Naive thymus-derived CD4-positive, alpha-beta T cell (primary cell): ENCODE measurements at regions of chr6 and their contacts with region 1.

Region 1: DNA sequence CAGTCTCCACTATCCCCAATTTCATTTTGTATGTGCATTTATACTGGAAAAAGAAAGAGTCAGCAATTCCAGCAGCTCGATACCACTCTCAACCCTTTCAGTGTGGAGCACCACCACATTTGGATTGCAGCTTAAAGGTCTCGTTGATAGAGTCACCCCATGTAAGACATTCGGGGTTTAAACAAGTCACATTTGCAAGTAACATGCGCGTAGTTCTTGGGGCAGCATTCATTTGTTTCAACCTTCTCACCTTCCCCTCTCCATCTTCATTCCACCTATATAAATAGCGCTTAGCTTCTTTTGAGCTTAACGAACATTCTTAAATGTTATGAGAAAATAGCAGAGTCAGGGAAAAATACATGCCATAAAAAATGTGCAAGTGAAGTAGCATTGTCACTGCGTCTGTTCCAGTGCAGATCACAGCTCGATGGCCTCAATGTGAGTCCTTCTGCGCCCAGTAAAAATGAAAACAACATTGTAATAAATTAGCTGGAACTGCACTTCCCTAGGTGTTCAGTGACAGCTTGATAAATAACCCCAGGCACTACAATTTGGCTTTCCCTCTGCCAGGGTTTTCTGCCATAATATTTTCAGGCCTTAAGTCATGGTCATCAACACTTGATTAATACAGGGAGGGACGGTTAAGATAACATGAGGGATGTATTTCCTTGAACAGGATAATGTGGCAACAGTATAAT is 737.8 kb upstream of the NRSN1 start:
- DNase-seq: no peak
- ATAC-seq: no peak
- H3K4me3 ChIP-seq: no peak overlapping the region
- H3K4me3 Mint-ChIP-seq: no peak overlapping the region
- H3K27ac ChIP-seq: no peak overlapping the region
- H3K27ac Mint-ChIP-seq: no peak overlapping the region
- H3K4me1 ChIP-seq: no peaks in the 10 kb centered on the region
- H3K4me1 Mint-ChIP-seq: no peaks in the 10 kb centered on the region
- H3K27me3 ChIP-seq: no peaks in the 10 kb centered on the region
- H3K27me3 Mint-ChIP-seq: no peaks in the 10 kb centered on the region

Region 2: DNA sequence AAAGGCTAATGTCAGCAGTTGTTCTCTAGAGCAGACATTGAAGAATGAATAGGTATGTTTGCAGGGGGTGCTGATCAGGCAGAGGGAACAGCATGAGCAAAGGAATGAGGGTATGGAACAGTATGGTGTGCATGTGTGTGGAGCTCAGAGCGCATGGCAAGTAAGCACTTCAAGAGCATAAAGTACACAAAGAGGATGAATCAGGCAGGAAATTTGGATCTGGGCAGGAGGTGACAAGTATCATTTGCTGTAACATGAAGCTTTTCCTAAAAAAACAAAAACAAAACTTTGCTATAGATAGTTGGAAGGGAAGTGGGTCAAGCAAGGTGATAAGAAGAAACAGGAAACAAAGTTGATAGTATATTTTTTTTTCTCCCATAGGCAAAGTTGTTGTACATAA is 72.1 kb before region 1 on chr6:
- CTCF ChIA-PET with region 1: no interaction called
- POLR2A ChIA-PET with region 1: no interaction called
- intact Hi-C with region 1: loop called in 1 of 2 experiments (anchors 2 kb)
- DNase-seq: no peak
- ATAC-seq: no peak
- H3K4me3 ChIP-seq: no peak overlapping the region
- H3K4me3 Mint-ChIP-seq: no peak overlapping the region
- H3K27ac ChIP-seq: no peak overlapping the region
- H3K27ac Mint-ChIP-seq: no peak overlapping the region
- H3K4me1 ChIP-seq: no peaks in the 10 kb centered on the region
- H3K4me1 Mint-ChIP-seq: no peaks in the 10 kb centered on the region
- H3K27me3 ChIP-seq: no peaks in the 10 kb centered on the region
- H3K27me3 Mint-ChIP-seq: no peaks in the 10 kb centered on the region

Region 3: DNA sequence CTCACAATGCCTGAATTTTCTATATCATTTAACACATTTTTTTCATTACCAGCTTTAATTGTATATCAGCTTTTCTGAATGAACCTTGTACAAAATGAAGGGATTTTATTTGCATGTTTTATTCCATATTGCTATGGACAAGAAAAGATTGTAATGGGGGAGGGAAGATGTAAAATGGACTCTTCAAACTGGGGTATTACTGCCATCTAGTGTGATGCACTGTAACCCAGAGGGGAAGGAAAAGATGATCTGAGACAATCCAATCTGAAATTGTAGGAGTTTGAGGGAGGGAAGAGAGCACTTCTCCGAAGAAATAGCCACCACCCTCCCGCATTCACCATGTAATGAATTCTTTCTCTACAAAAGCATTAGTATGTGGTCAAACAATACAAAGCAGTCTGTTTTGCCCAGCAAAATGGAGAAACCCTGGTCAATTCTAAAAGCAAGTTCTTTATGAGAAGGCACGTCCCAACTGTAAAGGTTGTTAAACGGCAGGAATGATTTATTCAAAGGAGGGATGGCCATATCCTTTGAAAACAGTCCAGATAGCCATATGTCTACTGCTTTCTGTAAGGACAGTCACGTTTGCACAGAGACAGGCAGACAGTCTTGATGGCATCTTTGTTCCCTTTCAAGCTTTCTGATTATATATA is 58.3 kb after region 1 on chr6:
- CTCF ChIA-PET with region 1: no interaction called
- POLR2A ChIA-PET with region 1: no interaction called
- intact Hi-C with region 1: no loop called
- DNase-seq: no peak
- ATAC-seq: no peak
- H3K4me3 ChIP-seq: no peak overlapping the region
- H3K4me3 Mint-ChIP-seq: no peak overlapping the region
- H3K27ac ChIP-seq: no peak overlapping the region
- H3K27ac Mint-ChIP-seq: no peak overlapping the region
- H3K4me1 ChIP-seq: no peaks in the 10 kb centered on the region
- H3K4me1 Mint-ChIP-seq: no peaks in the 10 kb centered on the region
- H3K27me3 ChIP-seq: no peaks in the 10 kb centered on the region
- H3K27me3 Mint-ChIP-seq: no peaks in the 10 kb centered on the region

Region 4: GRCh38 chr6:23477586-23477985 is 89.4 kb after region 1 on chr6:
- CTCF ChIA-PET with region 1: no interaction called
- POLR2A ChIA-PET with region 1: no interaction called
- intact Hi-C with region 1: no loop called
- DNase-seq: no peak
- ATAC-seq: no peak
- H3K4me3 ChIP-seq: no peak overlapping the region
- H3K4me3 Mint-ChIP-seq: no peak overlapping the region
- H3K27ac ChIP-seq: no peak overlapping the region
- H3K27ac Mint-ChIP-seq: no peak overlapping the region
- H3K4me1 ChIP-seq: no peaks in the 10 kb centered on the region
- H3K4me1 Mint-ChIP-seq: no peaks in the 10 kb centered on the region
- H3K27me3 ChIP-seq: no peaks in the 10 kb centered on the region
- H3K27me3 Mint-ChIP-seq: no peaks in the 10 kb centered on the region